ENCODE measurements at regions of chr19 and their contacts with region 1.

Region 1: DNA sequence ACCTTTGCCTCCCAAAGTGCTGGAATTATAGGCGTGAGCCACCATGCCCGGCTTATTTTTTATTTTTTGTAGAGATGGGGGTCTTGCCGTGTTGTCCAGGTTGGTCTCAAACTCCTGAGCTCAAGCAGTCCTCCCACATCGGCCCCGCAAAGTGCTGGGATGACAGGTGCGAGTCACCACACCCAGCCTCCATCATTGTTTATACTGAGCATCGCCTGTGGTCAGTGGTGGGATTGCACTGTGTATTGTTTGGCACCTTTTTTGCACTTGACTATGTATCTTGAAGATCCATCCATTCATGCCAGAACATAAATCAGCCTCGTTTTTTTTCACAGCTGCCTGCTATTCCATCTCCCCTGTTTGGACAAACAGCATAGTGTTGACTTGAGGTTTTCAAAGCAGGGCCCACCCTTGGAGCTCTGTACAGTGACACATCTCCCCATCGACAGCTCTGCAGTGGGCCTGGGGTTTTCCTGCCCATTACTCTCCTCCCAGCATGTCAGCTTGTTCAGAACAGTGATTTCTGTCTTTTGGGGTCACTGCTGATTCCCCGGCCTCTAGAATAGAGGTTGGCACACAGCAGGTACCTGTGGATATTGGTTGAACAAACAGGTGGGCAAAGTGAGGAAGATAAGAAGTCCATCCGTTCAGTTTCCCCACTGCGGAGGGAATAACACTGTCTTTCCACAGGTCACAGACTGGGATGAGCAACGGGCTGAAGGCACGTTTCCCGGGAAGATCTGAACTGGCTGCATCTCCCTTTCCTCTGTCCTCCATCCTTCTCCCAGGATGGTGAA is 8.2 kb upstream of the UPK1A start:
- DNase-seq: no peak
- ATAC-seq: no peak
- H3K4me3 ChIP-seq: no peak overlapping the region
- H3K4me3 Mint-ChIP-seq: no peak overlapping the region
- H3K27ac ChIP-seq: no peak overlapping the region
- H3K27ac Mint-ChIP-seq: no peak overlapping the region
- H3K4me1 ChIP-seq: peaks cover 0 to 3% of the 10 kb centered on the region in 2 experiments
- H3K4me1 Mint-ChIP-seq: peaks cover 12 to 15% (median 13%) of the 10 kb centered on the region in 3 donors
- H3K27me3 ChIP-seq: no peaks in the 10 kb centered on the region
- H3K27me3 Mint-ChIP-seq: no peaks in the 10 kb centered on the region

Region 2: DNA sequence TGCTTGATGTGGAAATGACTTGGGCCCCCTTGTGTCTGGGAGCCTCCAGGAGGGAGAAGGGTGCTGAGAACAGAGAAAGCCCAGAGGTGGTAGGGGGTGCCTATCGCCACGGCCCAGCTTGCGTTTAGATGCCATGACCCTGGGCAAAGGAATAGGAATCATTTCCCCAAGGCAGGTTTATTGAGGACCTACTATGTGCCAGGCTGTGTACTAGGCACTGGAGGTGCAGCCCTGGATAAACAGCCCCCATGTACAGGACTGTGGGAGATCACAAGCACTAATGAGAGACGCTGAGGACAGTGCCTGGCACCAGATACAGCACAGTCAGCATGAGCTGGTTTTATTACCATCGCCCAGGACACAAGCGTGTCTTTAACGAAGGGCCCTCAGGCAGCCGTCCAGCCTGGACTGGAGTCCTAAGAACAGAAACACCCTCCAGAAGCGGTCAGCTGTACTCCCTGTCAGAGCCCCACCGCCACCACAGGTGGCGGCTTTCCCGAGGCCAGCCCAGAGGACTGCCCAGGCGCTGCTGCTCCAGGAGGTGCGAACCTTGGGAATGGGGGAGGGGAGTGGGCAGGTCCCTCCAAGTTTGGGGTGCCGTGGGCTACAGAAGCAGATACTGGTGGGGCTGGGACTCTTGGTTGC is 108.1 kb before region 1 on chr19:
- CTCF ChIA-PET with region 1: no interaction called
- POLR2A ChIA-PET with region 1: interaction called in 1 of 2 experiments, 13 read pairs
- DNase-seq: no peak
- ATAC-seq: no peak
- H3K4me3 ChIP-seq: no peak overlapping the region
- H3K4me3 Mint-ChIP-seq: no peak overlapping the region
- H3K27ac ChIP-seq: no peak overlapping the region
- H3K27ac Mint-ChIP-seq: no peak overlapping the region
- H3K4me1 ChIP-seq: peaks cover 7 to 27% of the 10 kb centered on the region in 2 experiments
- H3K4me1 Mint-ChIP-seq: peaks cover 27 to 30% (median 28%) of the 10 kb centered on the region in 3 donors
- H3K27me3 ChIP-seq: no peaks in the 10 kb centered on the region
- H3K27me3 Mint-ChIP-seq: no peaks in the 10 kb centered on the region

Region 3: GRCh38 chr19:35592226-35592625 is 65.9 kb before region 1 on chr19:
- CTCF ChIA-PET with region 1: no interaction called
- POLR2A ChIA-PET with region 1: interaction called in 1 of 2 experiments, 11 read pairs
- DNase-seq: peak in 5 of 35 experiments; percentile 11 to 70 (median 18)
- ATAC-seq: no peak
- H3K4me3 ChIP-seq: no peak overlapping the region
- H3K4me3 Mint-ChIP-seq: no peak overlapping the region
- H3K27ac ChIP-seq: no peak overlapping the region
- H3K27ac Mint-ChIP-seq: no peak overlapping the region
- H3K4me1 ChIP-seq: no peaks in the 10 kb centered on the region
- H3K4me1 Mint-ChIP-seq: peaks cover 0 to 2% (median 0%) of the 10 kb centered on the region in 3 donors
- H3K27me3 ChIP-seq: peaks cover 0 to 16% of the 10 kb centered on the region in 2 experiments
- H3K27me3 Mint-ChIP-seq: peaks cover 0 to 6% of the 10 kb centered on the region in 2 donors

Region 4: DNA sequence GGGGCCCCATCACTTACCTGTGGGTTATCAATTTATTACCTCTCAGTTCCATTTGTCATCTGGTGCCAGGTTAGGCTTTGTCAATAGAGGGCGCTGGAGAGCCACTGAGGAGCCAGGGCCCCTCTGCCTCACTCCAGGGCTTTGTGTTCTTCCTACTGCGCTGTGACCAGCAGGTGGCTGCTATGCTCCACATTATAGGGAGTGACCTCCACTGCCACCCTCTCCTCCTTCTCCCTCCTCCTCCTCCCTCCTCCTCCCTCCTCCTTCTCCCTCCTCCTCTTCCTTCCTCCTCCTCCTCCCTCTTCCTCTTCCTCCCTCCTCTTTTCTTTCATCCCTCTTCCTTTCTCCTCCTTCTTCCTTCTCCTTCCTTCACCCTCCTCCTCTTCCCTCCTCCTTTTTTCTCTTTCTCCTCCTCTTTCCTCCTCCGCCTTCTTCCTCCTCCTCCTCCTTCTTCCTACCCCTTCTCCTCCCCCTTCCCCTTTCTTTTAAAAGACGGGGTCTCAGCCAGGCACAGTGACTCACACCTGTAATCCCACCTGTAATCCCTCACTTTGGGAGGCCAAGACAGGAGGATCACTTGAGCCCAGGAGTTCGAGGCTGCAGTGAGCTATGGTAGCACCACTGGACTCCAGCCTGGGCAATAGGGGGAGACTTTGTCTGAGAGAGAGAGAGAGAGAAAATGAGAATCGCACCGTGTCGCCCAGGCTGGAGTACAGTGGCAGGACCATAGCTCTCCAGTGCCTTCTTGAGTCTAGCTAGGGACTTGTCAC is 35.9 kb after region 1 on chr19:
- CTCF ChIA-PET with region 1: interaction called in 1 of 2 experiments, 3 read pairs
- POLR2A ChIA-PET with region 1: interaction called in 1 of 2 experiments, 11 read pairs
- DNase-seq: peak; percentile 75 to 96 (median 86)
- ATAC-seq: peak; percentile 100
- H3K4me3 ChIP-seq: no peak overlapping the region
- H3K4me3 Mint-ChIP-seq: no peak overlapping the region
- H3K27ac ChIP-seq: no peak overlapping the region
- H3K27ac Mint-ChIP-seq: no peak overlapping the region
- H3K4me1 ChIP-seq: no peaks in the 10 kb centered on the region
- H3K4me1 Mint-ChIP-seq: no peaks in the 10 kb centered on the region
- H3K27me3 ChIP-seq: peaks cover 0 to 3% of the 10 kb centered on the region in 2 experiments
- H3K27me3 Mint-ChIP-seq: no peaks in the 10 kb centered on the region